Activated naive CD4-positive, alpha-beta T cell treated with anti-CD3 and anti-CD28 coated beads for 36 hours (primary cell): ENCODE measurements at regions of chr3 and their contacts with region 1.

Region 1: DNA sequence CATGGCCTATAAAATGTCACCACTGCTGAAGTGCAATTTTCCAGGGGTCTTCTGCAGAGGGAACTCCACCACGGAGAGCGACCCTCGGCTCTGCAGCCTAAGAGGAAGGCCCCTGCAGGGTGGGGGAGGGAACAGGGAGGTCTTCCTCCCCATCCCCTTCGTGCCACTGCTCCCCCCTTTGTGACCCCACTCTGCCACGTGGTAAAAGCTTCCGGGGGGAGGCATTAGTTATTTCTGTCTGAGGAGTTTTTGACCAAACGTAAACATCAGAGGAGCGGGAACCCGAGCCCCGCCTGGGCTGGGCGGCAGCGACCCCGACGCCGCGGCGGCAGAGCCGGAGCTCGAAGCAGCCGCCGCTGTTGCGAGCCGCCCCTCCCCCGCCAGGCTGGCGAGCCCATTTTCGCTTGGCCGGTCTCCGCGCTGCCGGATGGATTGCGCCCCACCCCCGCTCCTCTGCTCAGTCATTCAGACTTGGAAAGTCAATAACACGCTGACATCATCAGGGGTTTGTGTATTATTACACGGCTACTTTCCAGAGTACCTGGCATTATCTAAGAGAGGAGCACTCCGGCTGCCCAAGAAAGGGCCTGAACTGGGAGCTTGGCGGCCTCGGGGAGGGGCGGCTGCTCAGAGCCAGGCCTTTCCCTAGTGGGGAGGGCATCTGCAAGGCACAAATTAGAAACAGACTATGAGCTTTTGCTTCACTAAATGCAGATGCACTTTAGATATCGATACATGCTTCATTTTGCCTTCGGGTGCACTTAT is 162.5 kb upstream of the TBL1XR1 start:
- DNase-seq: peak; percentile 95
- H3K4me3 Mint-ChIP-seq: peak overlapping the region; percentile 72
- H3K27ac Mint-ChIP-seq: peak overlapping the region; percentile 94
- H3K4me1 Mint-ChIP-seq: peaks cover 54% of the 10 kb centered on the region
- H3K27me3 Mint-ChIP-seq: no peaks in the 10 kb centered on the region

Region 2: DNA sequence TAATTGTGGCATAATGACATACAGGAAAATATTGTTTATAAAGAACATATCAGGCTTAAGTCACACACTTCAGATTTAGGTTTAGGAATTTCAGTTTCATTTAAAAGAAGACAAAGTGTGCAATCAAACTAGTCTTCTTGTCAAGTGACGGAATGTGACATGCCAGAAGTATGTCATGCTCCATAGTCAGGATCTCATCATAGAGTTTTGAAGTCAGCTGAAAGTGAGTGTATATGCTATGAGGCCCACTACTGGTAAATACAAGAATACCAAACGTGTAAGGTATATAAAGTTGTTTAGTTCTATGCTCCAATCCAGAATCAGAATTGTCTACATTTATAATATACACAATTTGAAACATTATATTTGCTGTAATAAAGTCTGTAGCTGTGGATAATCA is 1150.9 kb before region 1 on chr3:
- CTCF ChIA-PET with region 1: no interaction called
- intact Hi-C with region 1: no loop called
- DNase-seq: no peak
- H3K4me3 Mint-ChIP-seq: no peak overlapping the region
- H3K27ac Mint-ChIP-seq: no peak overlapping the region
- H3K4me1 Mint-ChIP-seq: no peaks in the 10 kb centered on the region
- H3K27me3 Mint-ChIP-seq: no peaks in the 10 kb centered on the region

Region 3: GRCh38 chr3:177050501-177051237 is 309.1 kb before region 1 on chr3:
- CTCF ChIA-PET with region 1: interaction called, 3 read pairs
- intact Hi-C with region 1: loop called (anchors 1 kb)
- DNase-seq: no peak
- H3K4me3 Mint-ChIP-seq: no peak overlapping the region
- H3K27ac Mint-ChIP-seq: no peak overlapping the region
- H3K4me1 Mint-ChIP-seq: peaks cover 11% of the 10 kb centered on the region
- H3K27me3 Mint-ChIP-seq: no peaks in the 10 kb centered on the region

Region 4: GRCh38 chr3:177144923-177145780 is 214.6 kb before region 1 on chr3:
- CTCF ChIA-PET with region 1: no interaction called
- intact Hi-C with region 1: loop called (anchors 2 kb)
- DNase-seq: no peak
- H3K4me3 Mint-ChIP-seq: no peak overlapping the region
- H3K27ac Mint-ChIP-seq: peak overlapping the region; percentile 56
- H3K4me1 Mint-ChIP-seq: peaks cover 67% of the 10 kb centered on the region
- H3K27me3 Mint-ChIP-seq: no peaks in the 10 kb centered on the region

Region 5: DNA sequence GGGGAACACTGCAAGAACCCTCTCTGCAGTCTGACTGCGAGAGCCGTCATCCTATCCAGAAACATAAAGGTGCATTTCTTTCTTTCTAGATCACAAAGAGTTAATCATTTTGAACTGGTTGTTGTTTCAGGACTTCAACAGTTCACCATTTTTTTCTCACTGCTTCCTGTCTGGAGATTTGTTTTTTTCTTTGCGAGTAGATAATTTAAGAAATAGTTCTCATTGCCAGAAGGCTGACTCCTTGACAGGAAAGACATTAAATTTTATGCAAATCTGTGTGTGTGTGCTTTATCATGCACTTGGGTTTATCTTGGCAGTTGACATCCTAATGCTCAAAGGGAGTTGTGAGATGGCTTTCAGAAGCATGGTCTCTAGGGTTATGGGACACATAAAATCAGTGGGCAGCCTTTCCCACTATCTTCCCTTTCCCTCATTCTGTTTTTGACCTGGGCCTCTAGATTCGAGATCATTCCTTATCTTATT is 39.0 kb before region 1 on chr3:
- CTCF ChIA-PET with region 1: no interaction called
- intact Hi-C with region 1: loop called (anchors 1 kb)
- DNase-seq: no peak
- H3K4me3 Mint-ChIP-seq: no peak overlapping the region
- H3K27ac Mint-ChIP-seq: peak overlapping the region; percentile 65
- H3K4me1 Mint-ChIP-seq: peaks cover 36% of the 10 kb centered on the region
- H3K27me3 Mint-ChIP-seq: no peaks in the 10 kb centered on the region

Region 6: GRCh38 chr3:177345049-177345972 is 14.5 kb before region 1 on chr3:
- CTCF ChIA-PET with region 1: interaction called, 4 read pairs
- intact Hi-C with region 1: loop called (anchors 1 kb)
- DNase-seq: peak; percentile 86
- H3K4me3 Mint-ChIP-seq: peak overlapping the region; percentile 34
- H3K27ac Mint-ChIP-seq: peak overlapping the region; percentile 87
- H3K4me1 Mint-ChIP-seq: peaks cover 42% of the 10 kb centered on the region
- H3K27me3 Mint-ChIP-seq: no peaks in the 10 kb centered on the region

Region 7: GRCh38 chr3:177597311-177598096 is 237.7 kb after region 1 on chr3:
- CTCF ChIA-PET with region 1: no interaction called
- intact Hi-C with region 1: loop called (anchors 2 kb)
- DNase-seq: peak; percentile 51
- H3K4me3 Mint-ChIP-seq: peak overlapping the region; percentile 54
- H3K27ac Mint-ChIP-seq: peak overlapping the region; percentile 91
- H3K4me1 Mint-ChIP-seq: peaks cover 66% of the 10 kb centered on the region
- H3K27me3 Mint-ChIP-seq: no peaks in the 10 kb centered on the region

Region 8: GRCh38 chr3:178001670-178002101 is 641.9 kb after region 1 on chr3:
- CTCF ChIA-PET with region 1: no interaction called
- intact Hi-C with region 1: loop called (anchors 10 kb)
- DNase-seq: peak; percentile 59
- H3K4me3 Mint-ChIP-seq: no peak overlapping the region
- H3K27ac Mint-ChIP-seq: peak overlapping the region; percentile 80
- H3K4me1 Mint-ChIP-seq: peaks cover 63% of the 10 kb centered on the region
- H3K27me3 Mint-ChIP-seq: no peaks in the 10 kb centered on the region